IMR-90 (cell line): ENCODE measurements at regions of chr3 and their contacts with region 1.

Region 1: DNA sequence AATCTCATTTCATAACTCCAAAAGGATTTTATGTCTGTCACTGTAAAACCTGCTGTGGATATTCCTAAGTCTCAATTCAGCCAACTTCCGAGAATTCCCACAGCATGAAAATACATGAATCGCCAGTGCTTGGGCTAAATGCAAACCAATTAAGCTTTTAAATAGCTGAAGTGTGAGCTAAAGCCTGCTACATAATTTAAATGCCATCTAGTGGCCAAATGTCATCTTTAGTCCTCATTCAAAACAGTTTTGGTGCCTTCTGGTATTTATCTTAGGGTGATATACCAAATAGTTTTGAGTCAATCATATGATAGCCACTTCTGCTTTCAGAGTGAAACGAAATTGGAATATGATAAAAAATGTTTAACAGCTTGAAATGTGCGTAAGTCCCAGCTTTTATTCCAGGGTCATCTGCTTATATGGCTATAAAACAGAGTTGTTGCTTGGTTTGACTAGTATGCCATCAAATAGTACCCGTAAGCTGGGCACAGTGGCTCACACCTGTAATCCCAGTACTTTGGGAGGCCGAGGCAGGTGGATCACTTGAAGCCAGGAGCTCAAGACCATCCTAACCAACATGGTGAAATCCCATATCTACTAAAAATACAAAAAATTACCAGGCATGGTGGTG is 41.8 kb upstream of the CCNL1 start:
- DNase-seq: peak; percentile 40
- ATAC-seq: peak; percentile 62
- H3K4me3 ChIP-seq: no peak overlapping the region
- H3K27ac ChIP-seq: no peak overlapping the region
- H3K4me1 ChIP-seq: no peaks in the 10 kb centered on the region; the same call in 1 of the 2 replicates
- H3K27me3 ChIP-seq: no peaks in the 10 kb centered on the region
- CTCF ChIP-seq: peak; percentile 50
- POLR2A ChIP-seq: no peak
- RAD21 ChIP-seq: peak; percentile 48

Region 2: DNA sequence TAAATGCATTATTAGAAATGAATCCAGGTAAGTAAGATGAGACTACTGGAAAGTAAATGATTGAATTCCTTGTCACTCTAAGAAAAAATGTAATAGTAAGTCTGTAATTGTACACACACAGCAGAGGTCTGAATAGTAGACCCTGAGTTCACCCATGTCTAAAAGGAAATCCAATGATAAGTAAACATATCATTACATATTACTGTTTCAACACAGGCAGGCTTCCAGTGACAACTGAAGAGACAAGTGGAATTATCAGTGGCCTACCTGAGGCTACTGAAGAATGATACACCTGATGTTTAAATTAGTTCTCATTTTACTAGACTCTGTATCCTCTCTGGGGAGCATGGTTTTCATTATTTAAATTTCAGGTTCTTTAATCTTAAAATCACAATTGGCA is 35.6 kb before region 1 on chr3:
- CTCF ChIA-PET with region 1: no interaction called
- POLR2A ChIA-PET with region 1: no interaction called
- dilution Hi-C with region 1: no loop called
- in situ Hi-C with region 1: no loop called
- intact Hi-C with region 1: no loop called
- DNase-seq: no peak
- ATAC-seq: no peak
- H3K4me3 ChIP-seq: no peak overlapping the region
- H3K27ac ChIP-seq: no peak overlapping the region
- H3K4me1 ChIP-seq: no peaks in the 10 kb centered on the region; the same call in none of the 2 replicates
- H3K27me3 ChIP-seq: no peaks in the 10 kb centered on the region
- CTCF ChIP-seq: no peak
- POLR2A ChIP-seq: no peak
- RAD21 ChIP-seq: no peak

Region 3: GRCh38 chr3:157182881-157183280 is 18.9 kb before region 1 on chr3:
- CTCF ChIA-PET with region 1: no interaction called
- POLR2A ChIA-PET with region 1: no interaction called
- dilution Hi-C with region 1: no loop called
- in situ Hi-C with region 1: no loop called
- intact Hi-C with region 1: no loop called
- DNase-seq: peak; percentile 17
- ATAC-seq: peak; percentile 48; the same call in 1 of the 2 replicates
- H3K4me3 ChIP-seq: no peak overlapping the region
- H3K27ac ChIP-seq: no peak overlapping the region
- H3K4me1 ChIP-seq: no peaks in the 10 kb centered on the region
- H3K27me3 ChIP-seq: no peaks in the 10 kb centered on the region
- CTCF ChIP-seq: peak; percentile 14; the same call in 1 of the 2 replicates
- POLR2A ChIP-seq: no peak
- RAD21 ChIP-seq: no peak

Region 4: DNA sequence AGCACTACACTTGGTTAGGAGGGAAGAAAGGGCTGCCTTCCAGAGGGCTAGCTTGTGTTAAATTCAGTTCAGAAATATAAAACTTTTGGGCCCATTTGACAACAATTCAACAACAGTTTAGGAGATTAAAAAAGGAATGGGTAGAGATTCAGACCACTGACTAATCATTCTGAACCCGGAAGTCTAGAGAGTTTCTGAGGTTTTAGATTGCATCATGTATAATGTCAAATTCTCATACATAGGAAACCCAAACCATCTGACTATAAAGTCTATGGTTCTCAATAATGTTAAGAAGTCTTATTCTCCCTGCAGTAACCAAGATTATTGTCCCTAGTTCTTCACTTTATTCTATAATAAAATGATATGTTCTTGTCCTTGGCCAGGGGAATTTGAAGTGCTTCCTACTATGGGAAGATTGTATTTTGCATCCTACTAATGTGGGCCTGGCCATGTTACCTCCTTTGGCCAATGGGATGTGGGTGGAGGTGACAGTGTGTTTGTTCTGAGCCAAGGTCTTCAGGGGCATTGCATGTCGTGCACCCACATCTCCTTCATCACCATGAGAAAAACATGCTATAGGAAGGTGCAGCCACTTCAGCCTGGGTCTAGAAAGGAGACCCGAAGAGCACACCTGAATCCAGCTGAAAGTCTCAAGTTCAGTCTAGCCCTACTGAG is 24.5 kb after region 1 on chr3:
- CTCF ChIA-PET with region 1: no interaction called
- POLR2A ChIA-PET with region 1: no interaction called
- dilution Hi-C with region 1: no loop called
- in situ Hi-C with region 1: no loop called
- intact Hi-C with region 1: loop called (anchors 1 kb)
- DNase-seq: peak; percentile 34
- ATAC-seq: peak; percentile 37; the same call in 1 of the 2 replicates
- H3K4me3 ChIP-seq: no peak overlapping the region
- H3K27ac ChIP-seq: no peak overlapping the region
- H3K4me1 ChIP-seq: no peaks in the 10 kb centered on the region; the same call in 1 of the 2 replicates
- H3K27me3 ChIP-seq: no peaks in the 10 kb centered on the region
- CTCF ChIP-seq: no peak
- POLR2A ChIP-seq: no peak
- RAD21 ChIP-seq: no peak

Region 5: DNA sequence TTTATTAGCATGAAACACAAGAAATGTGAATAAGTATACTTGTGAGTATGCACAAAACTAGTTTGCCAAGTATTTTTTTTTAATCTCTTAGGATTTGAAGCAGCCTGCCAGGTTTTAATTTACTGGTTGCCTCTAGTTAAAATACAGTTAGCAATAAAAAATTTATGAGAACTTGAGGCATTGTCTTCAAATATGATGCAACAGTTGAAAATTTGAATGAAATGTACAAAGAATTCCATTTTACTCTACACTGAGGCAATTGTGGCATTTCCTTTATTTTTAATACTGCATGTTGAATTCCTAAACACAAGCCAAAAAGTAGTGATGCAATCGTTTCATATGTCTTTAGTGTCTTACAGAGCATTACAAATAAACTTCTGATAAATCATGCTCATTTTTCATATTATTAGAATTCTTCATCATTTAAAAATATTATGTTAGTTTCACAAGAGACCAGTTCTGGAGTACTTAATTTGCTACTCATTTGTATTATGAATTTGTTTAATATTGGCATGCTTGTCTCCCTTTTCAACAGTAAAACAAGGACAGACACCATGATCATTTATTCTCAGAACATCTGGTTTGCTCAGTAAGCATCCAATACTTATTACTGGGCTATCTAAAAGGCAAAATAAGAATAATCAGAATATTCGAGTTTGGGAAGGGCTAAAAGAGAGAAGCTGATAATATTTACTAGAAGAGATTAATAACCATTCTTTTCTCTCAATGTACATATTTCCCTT is 110.0 kb after region 1 on chr3:
- CTCF ChIA-PET with region 1: no interaction called
- POLR2A ChIA-PET with region 1: no interaction called
- dilution Hi-C with region 1: no loop called
- in situ Hi-C with region 1: no loop called
- intact Hi-C with region 1: no loop called
- DNase-seq: peak; percentile 94
- ATAC-seq: peak; percentile 88
- H3K4me3 ChIP-seq: no peak overlapping the region
- H3K27ac ChIP-seq: peak overlapping the region; percentile 26; the same call in 1 of the 2 replicates
- H3K4me1 ChIP-seq: peaks cover 5% of the 10 kb centered on the region
- H3K27me3 ChIP-seq: no peaks in the 10 kb centered on the region
- CTCF ChIP-seq: no peak
- POLR2A ChIP-seq: no peak
- RAD21 ChIP-seq: no peak

Region 6: GRCh38 chr3:157354722-157355121 is 153.0 kb after region 1 on chr3:
- CTCF ChIA-PET with region 1: no interaction called
- POLR2A ChIA-PET with region 1: no interaction called
- dilution Hi-C with region 1: no loop called
- in situ Hi-C with region 1: no loop called
- intact Hi-C with region 1: loop called (anchors 5 kb)
- DNase-seq: peak; percentile 18
- ATAC-seq: 0 out of 2 replicates have a peak, but pooled peaks have one; percentile 22
- H3K4me3 ChIP-seq: no peak overlapping the region
- H3K27ac ChIP-seq: no peak overlapping the region
- H3K4me1 ChIP-seq: peaks cover 2% of the 10 kb centered on the region; the same call in 1 of the 2 replicates
- H3K27me3 ChIP-seq: no peaks in the 10 kb centered on the region
- CTCF ChIP-seq: peak; percentile 52
- POLR2A ChIP-seq: no peak
- RAD21 ChIP-seq: peak; percentile 50

Region 7: DNA sequence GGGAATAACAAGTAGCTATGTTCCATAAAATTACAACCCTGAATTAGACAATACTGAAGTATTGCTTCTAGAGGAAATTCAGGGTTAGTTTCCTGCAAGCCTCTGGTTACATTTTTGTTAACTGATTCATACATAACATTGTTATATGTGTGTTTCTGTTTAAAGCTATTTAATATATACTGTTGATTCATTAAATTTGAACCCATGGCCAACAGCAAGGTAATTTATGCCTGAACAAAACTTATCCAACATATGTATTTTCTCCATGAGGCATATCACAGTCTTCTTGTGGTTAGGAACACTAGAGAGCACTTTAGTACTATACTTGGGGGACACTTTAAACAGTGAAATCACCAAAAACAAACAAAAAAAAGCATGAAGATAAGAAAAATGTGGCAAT is 187.2 kb after region 1 on chr3:
- CTCF ChIA-PET with region 1: no interaction called
- POLR2A ChIA-PET with region 1: no interaction called
- dilution Hi-C with region 1: no loop called
- in situ Hi-C with region 1: no loop called
- intact Hi-C with region 1: no loop called
- DNase-seq: peak; percentile 76
- ATAC-seq: peak; percentile 79
- H3K4me3 ChIP-seq: no peak overlapping the region
- H3K27ac ChIP-seq: no peak overlapping the region
- H3K4me1 ChIP-seq: peaks cover 11% of the 10 kb centered on the region
- H3K27me3 ChIP-seq: no peaks in the 10 kb centered on the region
- CTCF ChIP-seq: no peak
- POLR2A ChIP-seq: no peak
- RAD21 ChIP-seq: no peak

Region 8: DNA sequence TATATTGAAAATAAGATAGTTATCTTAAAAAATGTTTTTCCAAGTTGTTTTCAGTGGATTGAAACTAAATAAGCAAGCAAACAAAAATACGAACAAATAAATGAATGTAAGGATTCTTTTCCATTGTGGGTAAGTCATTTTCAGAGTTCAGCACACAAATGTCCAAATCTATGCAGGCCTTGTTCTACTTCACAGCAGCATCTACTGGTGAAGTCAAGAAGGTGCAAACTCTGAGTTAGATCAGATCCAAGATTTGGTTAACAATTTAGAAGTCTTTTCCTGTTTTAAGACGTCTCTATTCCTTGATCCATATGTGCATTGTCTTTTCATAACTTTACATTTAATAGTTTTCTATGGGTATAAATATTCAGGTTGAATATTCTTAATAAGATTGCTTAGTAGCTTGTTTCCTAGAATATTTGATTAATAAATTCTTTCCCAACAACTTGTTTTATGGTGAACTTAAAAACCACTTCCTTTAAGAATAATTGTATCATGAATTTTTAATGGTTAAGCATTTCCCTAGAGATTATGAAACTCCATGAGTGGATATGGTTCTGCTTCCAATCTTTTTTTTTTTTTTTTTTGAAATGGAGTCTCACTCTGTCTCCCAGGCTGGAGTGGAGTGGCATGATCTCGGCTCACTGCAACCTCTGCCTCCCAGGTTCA is 245.4 kb after region 1 on chr3:
- CTCF ChIA-PET with region 1: interaction called, 3 read pairs
- POLR2A ChIA-PET with region 1: interaction called, 14 read pairs
- dilution Hi-C with region 1: no loop called
- in situ Hi-C with region 1: no loop called
- intact Hi-C with region 1: loop called (anchors 1 kb)
- DNase-seq: peak; percentile 70
- ATAC-seq: peak; percentile 56; the same call in 1 of the 2 replicates
- H3K4me3 ChIP-seq: no peak overlapping the region
- H3K27ac ChIP-seq: no peak overlapping the region
- H3K4me1 ChIP-seq: peaks cover 10% of the 10 kb centered on the region
- H3K27me3 ChIP-seq: no peaks in the 10 kb centered on the region
- CTCF ChIP-seq: peak; percentile 68
- POLR2A ChIP-seq: no peak
- RAD21 ChIP-seq: peak; percentile 73

Region 9: DNA sequence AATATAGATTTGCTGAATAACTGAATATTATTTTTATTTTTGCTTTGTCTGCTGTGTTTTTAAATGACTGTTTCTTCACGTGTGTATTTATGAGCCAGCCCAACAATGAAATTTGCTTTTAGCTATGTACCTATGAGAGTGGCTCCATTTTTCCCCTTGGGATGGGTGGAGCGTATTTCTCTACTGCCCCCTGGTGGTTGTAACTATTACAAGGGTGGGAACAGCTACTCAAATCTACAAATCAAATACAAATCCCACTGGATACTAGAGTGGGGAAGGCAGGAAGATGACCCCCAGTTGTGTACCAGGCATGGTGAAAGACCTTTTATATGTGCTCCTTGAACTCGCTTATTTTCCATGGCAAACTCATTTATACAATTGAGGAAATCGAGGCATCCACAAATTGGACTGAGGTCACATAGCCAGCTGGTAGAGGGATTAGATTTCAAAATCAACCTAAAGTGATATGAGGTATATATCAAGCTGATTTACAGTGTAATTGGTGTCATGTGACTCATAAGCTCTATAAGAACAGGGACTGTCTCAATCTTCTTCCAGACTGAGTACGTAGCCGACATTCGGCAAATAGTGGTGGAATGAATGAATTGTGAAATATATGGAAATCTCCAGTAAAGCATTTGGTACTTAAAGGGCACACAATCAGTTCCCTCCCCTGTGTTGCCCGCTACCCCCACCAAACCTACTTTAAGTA is 371.0 kb after region 1 on chr3:
- CTCF ChIA-PET with region 1: interaction called, 4 read pairs
- POLR2A ChIA-PET with region 1: no interaction called
- dilution Hi-C with region 1: no loop called
- in situ Hi-C with region 1: no loop called
- intact Hi-C with region 1: loop called (anchors 1 kb)
- DNase-seq: peak; percentile 64
- ATAC-seq: peak; percentile 84
- H3K4me3 ChIP-seq: no peak overlapping the region
- H3K27ac ChIP-seq: no peak overlapping the region
- H3K4me1 ChIP-seq: no peaks in the 10 kb centered on the region; the same call in 1 of the 2 replicates
- H3K27me3 ChIP-seq: no peaks in the 10 kb centered on the region; the same call in 1 of the 2 replicates
- CTCF ChIP-seq: peak; percentile 72
- POLR2A ChIP-seq: no peak
- RAD21 ChIP-seq: peak; percentile 66